Dorsolateral prefrontal cortex (tissue), 120 donors: ENCODE measurements at regions of chr13 and their contacts with region 1.

Region 1: GRCh38 chr13:30257468-30258099 is 49.8 kb downstream of the KATNAL1 start:
- DNase-seq: peak in 3 of 10 donors; percentile 33 to 64 (median 51)
- H3K4me3 ChIP-seq: peak overlapping the region in 8 of 59 donors; percentile 0 to 31 (median 12)
- H3K27ac ChIP-seq: peak overlapping the region in 53 of 59 donors; percentile 3 to 80 (median 64)
- H3K27me3 ChIP-seq: no peaks in the 10 kb centered on the region
- CTCF ChIP-seq: no peak

Region 2: GRCh38 chr13:30334663-30335386 is 77.2 kb after region 1 on chr13:
- intact Hi-C with region 1: loop called in 1 of 2 experiments (anchors 5 kb)
- DNase-seq: no peak
- H3K4me3 ChIP-seq: no peak overlapping the region
- H3K27ac ChIP-seq: peak overlapping the region in 1 of 59 donors; percentile 14
- H3K27me3 ChIP-seq: no peaks in the 10 kb centered on the region
- CTCF ChIP-seq: peak in 55 of 56 donors; percentile 39 to 79 (median 61)